Lower leg skin (tissue), 4 donors: ENCODE measurements at regions of chr4 and their contacts with region 1.

Region 1: DNA sequence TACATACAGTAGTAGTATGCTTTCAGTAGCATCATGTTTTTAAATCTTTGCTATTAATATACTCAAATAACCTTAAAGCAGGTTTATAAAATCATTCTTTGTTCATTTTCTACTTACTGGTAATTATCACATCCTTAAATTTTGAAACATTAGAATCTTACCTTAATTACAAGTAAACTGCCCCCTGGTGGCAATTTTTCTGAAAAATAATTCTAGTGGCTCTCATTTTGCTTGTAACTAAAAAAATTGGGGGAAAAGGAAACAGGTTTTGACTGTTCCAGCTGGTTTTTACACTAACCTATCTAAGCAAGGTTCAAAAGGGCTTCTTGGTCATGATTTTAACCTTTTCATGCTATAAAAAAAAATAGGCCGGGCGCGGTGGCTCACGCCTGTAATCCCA is 18.5 kb upstream of the DCAF4L1 start:
- DNase-seq: no peak
- H3K4me3 ChIP-seq: no peak overlapping the region
- CTCF ChIP-seq: no peak
- POLR2A ChIP-seq: no peak

Region 2: DNA sequence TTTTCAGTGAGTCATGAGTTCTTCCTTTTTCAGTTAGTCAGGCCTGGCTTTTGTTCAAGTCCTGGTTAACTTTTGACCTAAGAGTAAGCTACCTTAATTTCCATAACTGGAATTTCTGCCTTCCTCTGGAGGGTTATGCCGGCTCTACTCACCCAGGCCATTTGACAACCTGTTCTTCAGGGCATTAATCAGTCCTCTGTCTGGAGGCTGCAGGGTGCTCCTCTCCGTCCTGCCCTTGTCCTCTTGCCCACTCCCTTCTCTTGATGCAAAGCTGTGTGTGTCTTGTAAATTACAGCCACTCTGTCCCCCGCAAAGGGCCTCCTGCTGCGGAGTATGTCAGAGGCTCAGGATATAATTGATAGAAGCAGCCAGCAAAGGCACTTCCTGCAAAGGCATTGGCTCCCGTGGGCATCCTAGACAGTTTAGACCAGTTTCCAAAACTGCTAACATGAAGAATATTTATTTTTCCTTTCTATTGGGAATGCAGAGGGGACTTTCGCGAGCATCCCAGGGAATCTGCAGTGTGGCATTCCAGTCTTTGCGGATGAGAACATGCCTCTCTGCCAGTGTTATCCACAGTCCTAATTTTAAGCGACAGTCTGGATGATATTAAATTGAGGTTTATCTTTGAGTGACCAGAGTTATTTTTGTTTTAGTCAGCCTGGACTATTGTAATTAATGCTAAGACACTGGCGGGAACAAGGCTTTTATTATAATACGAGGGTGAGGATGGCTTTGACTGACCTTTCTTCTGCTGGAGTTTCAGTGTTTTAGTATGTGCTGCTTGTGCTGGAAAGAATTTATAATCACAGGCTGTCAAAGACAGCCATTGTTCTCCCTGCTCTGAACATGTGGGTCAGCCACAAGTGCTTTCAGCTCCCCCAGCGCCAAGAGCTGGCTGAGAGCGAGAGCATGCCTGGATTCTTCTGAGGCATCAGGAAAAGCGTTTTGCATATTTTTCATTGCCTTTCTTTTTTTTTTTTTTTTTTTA is 350.9 kb before region 1 on chr4:
- intact Hi-C with region 1: loop called (anchors 10 kb)
- DNase-seq: peak in 1 of 2 donors; percentile 28
- H3K4me3 ChIP-seq: no peak overlapping the region
- CTCF ChIP-seq: no peak
- POLR2A ChIP-seq: no peak

Region 3: DNA sequence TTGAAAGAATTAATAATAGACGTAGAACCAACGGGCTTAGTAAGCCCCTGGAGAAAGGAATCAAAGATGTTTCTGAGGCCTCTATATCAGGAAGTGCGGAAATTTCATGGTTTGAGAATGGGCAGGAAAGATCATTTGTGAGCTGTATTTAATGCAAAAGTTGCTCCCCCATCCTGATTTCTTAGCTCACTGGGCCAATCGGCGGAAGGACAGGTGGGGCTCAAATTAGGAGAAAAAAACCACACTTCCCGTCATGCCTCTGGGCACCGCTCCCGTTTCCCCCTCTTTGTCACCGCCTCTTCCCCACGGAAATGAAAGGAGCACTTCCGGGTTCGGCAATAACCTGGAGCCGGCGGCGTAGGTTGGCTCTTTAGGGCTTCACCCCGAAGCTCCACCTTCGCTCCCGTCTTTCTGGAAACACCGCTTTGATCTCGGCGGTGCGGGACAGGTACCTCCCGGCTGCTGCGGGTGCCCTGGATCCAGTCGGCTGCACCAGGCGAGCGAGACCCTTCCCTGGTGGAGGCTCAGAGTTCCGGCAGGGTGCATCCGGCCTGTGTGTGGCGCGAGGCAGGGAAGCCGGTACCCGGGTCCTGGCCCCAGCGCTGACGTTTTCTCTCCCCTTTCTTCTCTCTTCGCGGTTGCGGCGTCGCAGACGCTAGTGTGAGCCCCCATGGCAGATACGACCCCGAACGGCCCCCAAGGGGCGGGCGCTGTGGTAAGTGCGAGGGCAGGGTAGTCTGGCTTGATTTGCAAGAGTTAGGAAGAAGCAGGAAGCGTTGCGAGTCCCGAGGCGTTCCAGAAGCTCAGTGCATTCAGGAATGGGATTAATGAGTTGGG is 28.1 kb before region 1 on chr4 and contains the start of gene TMEM33:
- intact Hi-C with region 1: no loop called
- DNase-seq: peak; percentile 83 to 95
- H3K4me3 ChIP-seq: peak within 1 kb of the TSS; percentile 98
- CTCF ChIP-seq: no peak
- POLR2A ChIP-seq: no peak
- total RNA-seq, gene TMEM33: 42.5 to 59.9 (median 49.1) TPM